ENCODE measurements at regions of chr2 and their contacts with region 1.

Region 1: DNA sequence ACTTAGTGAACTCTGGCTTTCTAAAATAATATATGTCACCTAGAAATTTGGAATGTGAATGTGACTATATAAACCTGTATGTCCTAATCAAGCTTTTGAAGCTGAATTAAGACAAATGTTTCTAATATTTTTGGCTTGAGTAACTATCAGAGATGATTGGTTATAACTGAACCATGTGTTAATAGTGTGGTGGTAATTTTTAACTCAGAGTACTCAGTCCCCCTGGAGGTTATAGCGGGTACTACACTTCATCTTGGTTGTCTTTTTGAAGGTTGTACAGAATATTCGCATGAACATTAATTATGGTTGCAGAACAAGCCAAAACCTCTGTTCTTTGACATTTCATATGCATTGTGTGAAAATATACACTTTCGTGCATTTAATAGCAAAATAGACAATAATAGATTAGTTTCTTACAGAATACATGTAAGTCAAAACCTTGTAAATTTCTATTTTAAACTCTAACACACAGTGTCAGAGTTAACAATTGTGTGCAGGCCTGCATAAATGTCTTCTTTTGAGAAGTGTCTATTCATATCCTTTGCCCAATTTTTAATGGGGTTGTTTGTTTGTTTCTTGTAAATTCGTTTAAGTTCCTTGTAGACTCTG is 86.0 kb downstream of the OSBPL6 start:
- DNase-seq: no peak
- ATAC-seq: peak; percentile 62

Region 2: GRCh38 chr2:177964892-177965291 is 315.5 kb before region 1 on chr2:
- intact Hi-C with region 1: no loop called
- DNase-seq: no peak
- ATAC-seq: no peak

Region 3: GRCh38 chr2:178128836-178129630 is 151.3 kb before region 1 on chr2:
- intact Hi-C with region 1: loop called (anchors 5 kb)
- DNase-seq: no peak
- ATAC-seq: peak; percentile 31

Region 4: DNA sequence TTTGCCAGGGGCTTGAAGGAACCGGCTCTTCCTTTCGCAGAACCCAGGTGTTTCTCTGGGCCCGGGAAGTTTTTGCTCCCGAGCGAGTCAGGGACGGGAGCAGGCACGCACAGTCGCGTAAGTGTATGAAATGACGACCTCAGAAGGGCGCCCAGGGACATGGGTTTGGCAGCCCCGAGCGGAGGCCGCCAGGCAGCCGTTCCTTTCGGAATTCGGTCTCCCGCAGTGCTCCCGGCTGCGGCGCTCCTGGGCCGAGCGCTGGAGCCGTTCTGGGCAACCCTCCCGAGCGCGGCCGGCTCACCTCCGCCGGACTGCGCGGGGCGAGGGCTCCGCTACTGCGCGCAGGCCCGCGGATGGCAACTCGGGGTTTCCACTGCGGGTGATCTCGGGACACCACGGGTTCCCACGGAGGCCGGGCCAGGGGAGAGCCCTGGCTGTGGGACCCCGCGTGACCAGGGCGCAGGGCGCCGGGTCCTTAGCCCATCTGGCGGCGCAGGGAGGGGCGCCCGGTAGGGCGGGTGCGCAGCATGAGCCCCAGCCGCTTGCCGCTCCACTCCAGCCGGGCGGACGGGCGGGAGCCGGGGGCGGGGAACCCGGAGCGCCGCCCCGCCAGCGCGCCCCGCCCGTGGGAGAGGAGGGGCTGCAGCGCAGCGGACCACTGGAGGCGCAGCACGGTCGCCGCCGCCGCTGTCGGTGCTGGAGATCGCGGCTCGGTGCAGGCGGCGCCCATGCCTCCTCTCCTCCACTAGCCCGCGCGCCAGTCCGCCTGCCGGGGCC is 86.3 kb before region 1 on chr2 and contains the start of gene OSBPL6:
- intact Hi-C with region 1: loop called (anchors 5 kb)
- DNase-seq: peak; percentile 93
- ATAC-seq: peak; percentile 97
- total RNA-seq, gene OSBPL6: 4.6 TPM

Region 5: GRCh38 chr2:178225006-178225805 is 55.1 kb before region 1 on chr2:
- intact Hi-C with region 1: no loop called
- DNase-seq: no peak
- ATAC-seq: no peak

Measured in left ventricle myocardium superior (tissue), 1 donor.